OCI-LY7 (cell line): ENCODE measurements at regions of chr4 and their contacts with region 1.

Region 1: DNA sequence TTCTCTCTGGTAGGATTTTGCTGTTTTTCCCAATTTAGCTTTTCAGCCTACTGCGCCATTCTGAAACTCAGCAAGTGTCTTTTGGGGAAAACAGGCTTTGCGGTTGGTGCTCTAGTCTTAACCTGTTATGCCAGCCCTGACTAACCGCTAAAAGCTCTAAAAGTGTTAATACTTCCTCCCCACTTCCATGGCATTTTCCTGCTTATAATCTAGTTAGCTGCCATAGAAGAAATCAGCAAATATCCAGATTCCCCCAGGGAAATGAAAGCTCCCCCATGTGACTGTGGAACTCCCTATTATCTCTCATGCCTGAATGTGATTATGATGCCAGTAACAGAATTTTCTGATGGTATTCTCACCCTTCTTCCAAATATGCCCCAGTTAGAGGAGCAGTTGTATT is 28.7 kb upstream of the GYPA start:
- DNase-seq: no peak
- H3K4me3 ChIP-seq: no peak overlapping the region
- H3K27ac ChIP-seq: no peak overlapping the region
- H3K4me1 ChIP-seq: no peaks in the 10 kb centered on the region
- CTCF ChIP-seq: no peak

Region 2: DNA sequence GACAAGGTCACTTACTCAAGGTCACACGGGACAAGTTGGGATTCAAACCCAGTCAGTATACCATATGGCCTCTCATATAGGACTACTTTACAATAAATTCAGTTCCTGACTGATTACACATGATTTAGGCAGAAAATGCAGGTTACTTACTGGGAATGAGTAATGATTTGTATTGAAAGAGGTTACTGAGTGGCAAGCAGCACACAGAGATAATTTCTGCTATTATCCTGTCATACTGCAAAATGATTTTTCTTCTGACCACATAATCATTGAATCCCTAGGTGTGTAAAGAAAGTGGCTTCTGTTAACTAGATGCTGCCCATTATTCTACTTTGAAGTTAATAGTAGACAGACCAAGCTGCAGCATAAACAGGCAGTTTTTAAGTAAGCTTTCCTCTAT is 477.0 kb before region 1 on chr4:
- CTCF ChIA-PET with region 1: no interaction called
- POLR2A ChIA-PET with region 1: no interaction called
- intact Hi-C with region 1: no loop called
- DNase-seq: no peak
- H3K4me3 ChIP-seq: no peak overlapping the region
- H3K27ac ChIP-seq: no peak overlapping the region
- H3K4me1 ChIP-seq: no peaks in the 10 kb centered on the region
- CTCF ChIP-seq: no peak

Region 3: DNA sequence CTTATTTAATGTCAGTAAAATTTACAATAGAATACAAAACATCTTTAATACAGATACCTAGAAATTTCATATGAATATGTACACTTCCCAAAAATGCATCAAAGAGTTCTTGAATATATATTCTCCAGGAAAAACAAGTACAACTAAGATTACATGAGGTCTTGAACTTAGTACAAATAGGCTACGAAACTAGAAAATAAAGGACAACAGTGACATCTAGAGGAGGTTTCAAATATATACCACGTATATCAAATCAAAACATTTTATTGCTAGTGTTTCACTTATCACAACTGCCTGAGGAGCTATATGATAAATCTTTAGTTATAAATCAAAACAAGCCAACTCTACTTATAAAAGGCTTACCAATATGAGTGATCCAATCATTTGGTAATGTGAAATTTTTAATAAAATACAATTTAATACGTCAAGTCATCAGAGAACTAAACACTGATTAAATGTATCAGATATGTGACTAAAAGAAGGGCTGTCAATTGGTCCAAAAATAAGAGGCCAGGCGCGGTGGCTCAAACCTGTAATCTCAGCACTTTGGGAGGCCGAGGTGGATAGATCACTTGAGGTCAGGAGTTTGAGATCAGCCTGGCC is 892.2 kb after region 1 on chr4:
- CTCF ChIA-PET with region 1: no interaction called
- POLR2A ChIA-PET with region 1: no interaction called
- intact Hi-C with region 1: loop called (anchors 5 kb)
- DNase-seq: peak; percentile 60
- H3K4me3 ChIP-seq: no peak overlapping the region
- H3K27ac ChIP-seq: no peak overlapping the region
- H3K4me1 ChIP-seq: no peaks in the 10 kb centered on the region
- CTCF ChIP-seq: peak; percentile 86